Posterior vena cava (tissue), 2 donors: ENCODE measurements at regions of chr2 and their contacts with region 1.

Region 1: GRCh38 chr2:109702618-109702985 is 88.4 kb downstream of the SOWAHC start:
- DNase-seq: no peak

Region 2: DNA sequence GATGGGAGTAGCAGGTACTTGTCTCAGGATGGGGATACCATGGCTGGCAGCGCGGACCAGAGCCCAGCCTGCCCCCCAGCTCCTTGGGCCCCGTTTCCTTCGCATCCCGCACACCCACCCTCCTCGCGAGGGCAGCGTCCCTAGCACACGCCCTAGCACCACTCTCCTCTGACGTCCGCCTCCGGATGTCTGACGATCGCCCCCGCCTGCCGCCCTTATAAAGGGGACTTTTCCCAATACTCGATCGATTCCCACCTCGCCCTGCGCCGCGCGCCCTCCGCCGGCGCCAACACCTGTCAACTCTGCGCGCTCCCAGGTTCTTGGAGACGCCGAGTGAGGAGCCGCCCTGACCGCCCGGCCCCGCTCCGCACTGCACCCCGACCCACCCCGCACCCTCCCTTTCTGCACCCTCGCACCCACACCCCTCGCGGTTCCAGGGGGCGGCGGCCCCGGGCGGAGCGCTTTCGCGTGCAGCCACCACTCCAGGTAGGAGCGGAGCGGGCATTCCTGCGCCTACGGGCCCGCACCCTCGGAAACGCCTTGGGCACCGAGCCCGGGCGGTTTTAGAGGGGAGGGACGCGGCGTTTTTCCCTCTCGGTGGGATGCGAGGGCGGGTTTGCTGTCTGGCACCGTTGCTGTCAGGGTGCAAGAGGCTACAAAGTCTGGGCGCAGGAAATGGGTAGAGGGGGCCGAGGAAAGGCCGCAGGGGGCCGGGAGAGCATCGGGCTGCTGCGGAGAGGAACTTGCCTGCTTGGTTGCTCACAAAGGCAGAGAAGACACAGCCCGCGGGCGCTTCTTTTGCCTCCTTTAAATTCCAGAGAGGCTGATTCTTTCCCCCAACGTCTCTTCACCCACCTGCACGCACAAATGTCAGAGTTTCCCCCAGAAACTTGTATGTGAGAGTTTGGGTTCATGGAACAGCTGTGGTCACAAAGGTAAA is 1716.1 kb before region 1 on chr2 and contains the start of gene SLC5A7:
- intact Hi-C with region 1: no loop called
- DNase-seq: peak; percentile 73
- total RNA-seq, gene SLC5A7: 0.05 TPM in 1 of 2 donors, not detected in the other

Region 3: GRCh38 chr2:109031476-109032228 is 671.0 kb before region 1 on chr2:
- intact Hi-C with region 1: loop called in 1 of 2 experiments (anchors 5 kb)
- DNase-seq: peak; percentile 82

Region 4: DNA sequence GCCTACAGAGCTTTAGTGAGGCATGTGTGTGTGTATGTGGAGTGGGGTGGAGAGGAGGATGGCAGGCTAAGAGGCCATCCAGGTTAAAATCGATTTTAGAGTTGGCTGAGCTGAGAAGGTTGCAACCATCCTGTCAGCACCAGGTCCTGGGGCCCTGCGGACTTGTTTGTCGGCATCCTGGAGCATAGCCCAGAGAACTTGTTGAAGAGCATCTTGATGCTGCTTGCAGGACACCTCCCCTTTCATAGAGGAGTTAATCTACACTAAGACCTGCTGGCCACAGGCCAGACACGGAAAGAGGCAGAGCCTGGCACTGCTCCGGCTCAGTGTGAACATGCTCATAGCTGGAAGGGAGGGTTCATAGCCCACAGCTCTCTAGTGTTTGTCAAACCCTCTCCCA is 19.4 kb after region 1 on chr2:
- intact Hi-C with region 1: loop called in 1 of 2 experiments (anchors 1 kb)
- DNase-seq: peak; percentile 37